PC-9 (cell line): ENCODE measurements at regions of chr6 and their contacts with region 1.

Region 1: GRCh38 chr6:100479179-100480035 is 14.7 kb upstream of the SIM1 start:
- DNase-seq: no peak
- H3K4me3 ChIP-seq: no peak overlapping the region
- H3K27ac ChIP-seq: no peak overlapping the region
- H3K4me1 ChIP-seq: no peaks in the 10 kb centered on the region
- H3K27me3 ChIP-seq: no peaks in the 10 kb centered on the region
- CTCF ChIP-seq: peak; percentile 83

Region 2: DNA sequence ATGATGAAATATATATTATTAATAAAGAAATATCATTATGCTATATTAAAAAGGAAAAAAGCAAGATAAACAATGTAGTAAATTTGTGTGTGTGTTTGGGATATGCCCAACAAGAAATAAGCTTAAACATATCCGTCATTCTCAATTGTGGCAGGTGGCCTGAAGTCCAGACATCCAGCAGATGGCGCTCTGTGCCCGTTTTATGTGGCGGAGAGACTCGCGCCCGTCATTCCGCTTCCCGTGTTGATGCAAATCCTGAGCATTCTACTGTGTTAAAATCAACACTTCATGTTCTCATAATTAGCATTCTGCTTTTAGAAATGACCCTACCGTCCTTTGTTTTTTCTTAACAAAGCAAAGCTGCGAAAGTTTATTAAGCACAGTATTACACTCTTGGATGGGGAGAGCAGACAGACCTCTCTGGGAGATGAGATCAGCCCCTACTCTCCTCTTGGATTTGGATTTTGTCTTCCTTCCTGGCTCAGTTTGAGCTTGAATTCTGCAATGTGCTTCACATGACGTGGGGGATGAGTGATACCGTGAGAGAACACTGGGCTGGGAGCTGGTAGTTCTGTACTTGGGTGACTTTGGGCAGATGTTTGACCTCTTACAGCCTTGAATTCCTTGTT is 611.2 kb before region 1 on chr6:
- CTCF ChIA-PET with region 1: no interaction called
- POLR2A ChIA-PET with region 1: no interaction called
- intact Hi-C with region 1: loop called (anchors 5 kb)
- DNase-seq: peak; percentile 39 to 71
- H3K4me3 ChIP-seq: no peak overlapping the region
- H3K27ac ChIP-seq: no peak overlapping the region
- H3K4me1 ChIP-seq: no peaks in the 10 kb centered on the region
- H3K27me3 ChIP-seq: 0 out of 2 replicates have a peak, but pooled peaks cover 9% of the 10 kb centered on the region
- CTCF ChIP-seq: peak; percentile 90

Region 3: DNA sequence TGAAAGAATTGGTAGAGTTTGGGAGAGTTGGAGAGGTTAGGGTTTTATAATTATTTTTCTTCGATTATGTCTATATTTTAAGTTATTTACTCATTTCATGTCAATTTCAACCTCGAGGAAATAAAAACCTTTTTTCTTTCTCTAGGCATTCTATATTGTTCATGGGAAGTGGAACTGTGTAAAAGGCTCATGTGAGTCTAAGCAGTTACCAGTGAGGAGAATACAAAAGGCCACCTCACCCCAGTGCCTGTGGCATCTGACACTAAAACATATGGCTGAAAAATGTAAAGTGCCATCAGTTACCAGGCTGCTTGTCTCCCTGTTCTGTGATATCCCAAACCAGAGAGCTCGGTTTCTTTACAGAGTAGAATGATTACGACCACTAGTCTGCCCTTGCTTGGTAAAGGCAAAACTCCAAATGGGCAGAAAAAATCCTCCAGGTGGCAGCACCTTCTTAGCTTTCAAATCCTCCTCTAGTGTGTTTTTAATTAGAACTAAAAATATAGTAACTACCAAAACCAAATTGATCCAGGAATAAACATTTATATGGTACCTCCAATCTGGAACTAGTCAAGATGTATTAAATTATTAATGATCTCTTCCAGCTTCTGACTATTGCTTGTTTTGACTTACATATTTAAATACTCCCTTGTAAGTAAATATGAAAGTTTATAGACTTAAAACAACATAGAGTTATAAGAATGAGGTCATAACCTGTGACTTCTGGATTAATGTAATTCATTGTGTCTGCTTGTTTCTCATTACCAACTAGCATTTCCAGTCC is 362.8 kb before region 1 on chr6:
- CTCF ChIA-PET with region 1: no interaction called
- POLR2A ChIA-PET with region 1: no interaction called
- intact Hi-C with region 1: loop called (anchors 1 kb)
- DNase-seq: peak; percentile 53 to 59
- H3K4me3 ChIP-seq: no peak overlapping the region
- H3K27ac ChIP-seq: no peak overlapping the region
- H3K4me1 ChIP-seq: peaks cover 5% of the 10 kb centered on the region
- H3K27me3 ChIP-seq: no peaks in the 10 kb centered on the region
- CTCF ChIP-seq: peak; percentile 88

Region 4: GRCh38 chr6:100228831-100229641 is 250.4 kb before region 1 on chr6:
- CTCF ChIA-PET with region 1: no interaction called
- POLR2A ChIA-PET with region 1: no interaction called
- intact Hi-C with region 1: loop called (anchors 10 kb)
- DNase-seq: peak; percentile 72 to 77
- H3K4me3 ChIP-seq: peak overlapping the region; percentile 58
- H3K27ac ChIP-seq: peak overlapping the region; percentile 45
- H3K4me1 ChIP-seq: peaks cover 31% of the 10 kb centered on the region
- H3K27me3 ChIP-seq: no peaks in the 10 kb centered on the region
- CTCF ChIP-seq: no peak

Region 5: DNA sequence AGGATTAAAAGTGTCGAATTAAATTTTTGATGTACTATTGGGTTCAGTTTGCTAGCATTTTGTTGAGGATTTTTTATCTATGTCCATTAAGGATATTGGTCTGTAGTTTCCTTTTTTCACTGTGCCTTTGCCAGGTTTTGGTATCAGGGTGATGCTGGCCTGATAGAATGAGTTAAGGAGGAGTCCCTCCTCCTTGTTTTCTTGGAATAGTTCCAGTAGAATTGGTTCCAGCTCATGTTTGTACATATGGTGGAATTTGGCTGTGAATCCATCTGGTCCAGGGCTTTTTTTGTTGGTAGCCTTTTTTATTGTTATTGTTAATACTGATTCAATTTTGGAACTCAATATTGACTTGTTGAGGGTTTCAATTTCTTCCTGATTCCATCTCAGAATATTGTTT is 156.5 kb before region 1 on chr6:
- CTCF ChIA-PET with region 1: no interaction called
- POLR2A ChIA-PET with region 1: no interaction called
- intact Hi-C with region 1: no loop called
- DNase-seq: no peak
- H3K4me3 ChIP-seq: no peak overlapping the region
- H3K27ac ChIP-seq: no peak overlapping the region
- H3K4me1 ChIP-seq: no peaks in the 10 kb centered on the region
- H3K27me3 ChIP-seq: no peaks in the 10 kb centered on the region
- CTCF ChIP-seq: no peak

Region 6: GRCh38 chr6:100504786-100505737 is 25.7 kb after region 1 on chr6:
- CTCF ChIA-PET with region 1: no interaction called
- POLR2A ChIA-PET with region 1: no interaction called
- intact Hi-C with region 1: no loop called
- DNase-seq: peak in 1 of 2 experiments; percentile 60
- H3K4me3 ChIP-seq: no peak overlapping the region
- H3K27ac ChIP-seq: no peak overlapping the region
- H3K4me1 ChIP-seq: no peaks in the 10 kb centered on the region
- H3K27me3 ChIP-seq: no peaks in the 10 kb centered on the region
- CTCF ChIP-seq: no peak

Region 7: GRCh38 chr6:100657678-100658330 is 178.4 kb after region 1 on chr6:
- CTCF ChIA-PET with region 1: no interaction called
- POLR2A ChIA-PET with region 1: no interaction called
- intact Hi-C with region 1: loop called (anchors 10 kb)
- DNase-seq: peak in 1 of 2 experiments; percentile 56
- H3K4me3 ChIP-seq: no peak overlapping the region
- H3K27ac ChIP-seq: no peak overlapping the region
- H3K4me1 ChIP-seq: peaks cover 2% of the 10 kb centered on the region
- H3K27me3 ChIP-seq: no peaks in the 10 kb centered on the region
- CTCF ChIP-seq: peak; percentile 83